ENCODE measurements at regions of chr11 and their contacts with region 1.

Region 1: DNA sequence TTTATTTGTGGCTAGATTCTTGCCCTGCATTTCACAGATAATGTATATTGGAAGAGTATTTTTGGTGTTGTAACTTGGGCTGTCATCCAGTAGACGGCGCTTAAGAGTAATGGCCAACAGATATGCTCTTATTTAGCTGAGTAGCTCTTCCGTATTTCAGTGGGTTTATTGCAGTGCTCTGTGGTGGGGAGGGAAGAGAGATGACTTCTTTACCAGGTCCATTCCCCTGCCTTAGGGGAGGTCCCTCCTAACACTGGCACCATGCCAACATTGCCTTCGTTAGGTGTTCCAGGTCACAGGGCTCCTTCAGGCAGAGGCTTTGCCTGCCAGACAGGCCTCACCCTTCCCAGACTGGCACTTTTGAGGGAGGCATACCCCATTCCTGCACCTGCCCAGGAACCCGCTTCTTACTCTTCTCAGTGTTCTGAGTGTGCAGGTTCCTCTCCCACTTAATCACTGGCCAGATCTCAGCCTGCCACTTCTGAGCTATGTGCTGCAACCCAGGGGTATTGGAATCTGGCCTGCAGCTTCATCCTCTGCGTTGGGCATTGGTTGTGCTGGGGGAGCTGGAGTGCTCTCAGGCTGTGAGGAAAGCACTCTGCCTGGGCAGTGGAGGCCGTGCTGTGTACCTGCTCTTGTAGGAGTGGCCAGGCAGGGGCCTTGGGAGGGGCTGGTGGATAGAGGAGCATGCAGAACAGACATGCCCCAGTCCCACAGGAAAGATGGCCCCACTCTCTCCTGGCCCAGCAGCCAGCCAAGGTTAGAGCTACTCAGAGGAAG is 29.4 kb upstream of the SLN start:
- DNase-seq: peak; percentile 28
- ATAC-seq: peak; percentile 64
- H3K4me3 Mint-ChIP-seq: no peak overlapping the region
- H3K27ac Mint-ChIP-seq: no peak overlapping the region
- H3K4me1 Mint-ChIP-seq: no peaks in the 10 kb centered on the region
- H3K27me3 Mint-ChIP-seq: peaks cover 28% of the 10 kb centered on the region
- CTCF ChIP-seq: peak; percentile 39

Region 2: GRCh38 chr11:107770551-107770951 is 29.3 kb after region 1 on chr11:
- CTCF ChIA-PET with region 1: interaction called, 12 read pairs
- POLR2A ChIA-PET with region 1: no interaction called
- intact Hi-C with region 1: no loop called
- DNase-seq: no peak
- ATAC-seq: no peak
- H3K4me3 Mint-ChIP-seq: no peak overlapping the region
- H3K27ac Mint-ChIP-seq: no peak overlapping the region
- H3K4me1 Mint-ChIP-seq: peaks cover 1% of the 10 kb centered on the region
- H3K27me3 Mint-ChIP-seq: peaks cover 8% of the 10 kb centered on the region
- CTCF ChIP-seq: no peak

Region 3: GRCh38 chr11:107898270-107898669 is 157.0 kb after region 1 on chr11:
- CTCF ChIA-PET with region 1: interaction called, 14 read pairs
- POLR2A ChIA-PET with region 1: no interaction called
- intact Hi-C with region 1: no loop called
- DNase-seq: no peak
- ATAC-seq: peak; percentile 85
- H3K4me3 Mint-ChIP-seq: no peak overlapping the region
- H3K27ac Mint-ChIP-seq: no peak overlapping the region
- H3K4me1 Mint-ChIP-seq: no peaks in the 10 kb centered on the region
- H3K27me3 Mint-ChIP-seq: peaks cover 10% of the 10 kb centered on the region
- CTCF ChIP-seq: peak; percentile 76